ENCODE measurements at regions of chr6 and their contacts with region 1.

Region 1: DNA sequence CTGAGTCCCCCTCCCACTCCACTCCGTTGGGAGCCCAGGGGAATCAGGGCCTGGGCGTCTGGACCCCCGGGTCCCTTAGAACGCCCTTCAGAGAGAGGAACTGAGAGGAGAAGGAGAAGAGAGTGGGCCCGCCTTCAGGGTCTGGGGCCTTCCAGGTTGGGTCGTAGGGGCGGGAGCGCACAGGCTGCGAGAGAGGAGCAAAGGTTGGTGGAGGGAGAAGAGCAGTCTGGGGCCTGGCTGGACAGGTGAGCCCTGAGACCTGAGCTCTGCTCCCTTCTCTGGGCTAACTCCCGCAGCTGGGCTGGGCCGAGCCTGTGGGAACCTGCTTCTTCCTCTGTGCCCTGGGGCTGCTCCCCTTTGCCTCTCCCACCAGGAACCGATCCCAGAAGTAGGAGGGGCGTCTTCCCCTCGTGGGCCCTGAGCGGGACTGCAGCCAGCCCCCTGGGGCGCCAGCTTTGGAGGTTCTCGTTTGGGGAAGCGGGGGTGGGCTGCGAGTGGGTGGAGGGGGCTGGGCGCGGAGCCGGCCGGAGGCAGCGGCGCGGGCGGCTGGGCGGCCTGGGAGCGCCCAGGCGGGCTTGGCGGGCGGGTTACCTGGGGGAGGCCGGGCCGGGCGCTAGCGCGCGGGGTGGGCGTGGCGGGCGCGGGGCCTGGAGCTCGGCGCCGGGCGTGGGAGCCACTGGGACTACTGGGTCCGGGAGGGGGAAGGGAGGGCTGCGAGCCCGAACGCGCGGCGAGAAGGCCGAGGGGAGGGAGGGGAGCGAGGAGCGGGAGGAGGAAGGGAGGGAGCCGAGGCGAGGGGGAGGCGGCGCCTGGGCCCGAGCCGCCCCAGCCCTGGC is at the start of gene DDR1:
- DNase-seq: peak; percentile 75
- ATAC-seq: peak; percentile 31
- H3K4me3 ChIP-seq: peak within 1 kb of the TSS; percentile 70
- H3K27ac ChIP-seq: peak within 1 kb of the TSS; percentile 93
- H3K4me1 ChIP-seq: peaks cover 58% of the 10 kb centered on the region
- H3K27me3 ChIP-seq: no peaks in the 10 kb centered on the region
- CTCF ChIP-seq: no peak
- total RNA-seq, gene DDR1: 108 and 144 TPM in 2 replicates

Region 2: GRCh38 chr6:30192076-30192475 is 691.8 kb before region 1 on chr6:
- CTCF ChIA-PET with region 1: no interaction called
- POLR2A ChIA-PET with region 1: interaction called, 10 read pairs
- intact Hi-C with region 1: no loop called
- DNase-seq: no peak
- ATAC-seq: no peak
- H3K4me3 ChIP-seq: no peak overlapping the region
- H3K27ac ChIP-seq: no peak overlapping the region
- H3K4me1 ChIP-seq: no peaks in the 10 kb centered on the region
- H3K27me3 ChIP-seq: no peaks in the 10 kb centered on the region
- CTCF ChIP-seq: no peak

Region 3: DNA sequence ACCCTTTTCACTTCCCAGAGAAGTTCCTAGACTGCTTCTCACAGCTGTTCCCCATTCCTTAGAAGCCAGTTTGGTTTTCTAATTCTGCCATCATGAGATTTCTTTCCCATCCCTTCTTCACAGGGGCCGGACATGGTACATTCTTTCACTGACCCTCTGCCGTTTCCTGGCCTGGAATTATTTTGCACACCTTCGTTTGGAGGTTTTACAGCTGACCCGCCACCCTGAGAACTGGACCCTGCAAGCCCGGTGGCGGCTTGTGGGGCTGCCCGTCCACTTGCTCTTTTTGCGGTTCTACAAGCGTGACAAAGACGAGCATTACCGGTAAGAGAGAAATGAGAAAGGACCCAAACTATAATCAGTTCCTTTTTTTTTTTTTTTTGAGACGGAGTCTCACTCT is 232.8 kb before region 1 on chr6:
- CTCF ChIA-PET with region 1: no interaction called
- POLR2A ChIA-PET with region 1: no interaction called
- intact Hi-C with region 1: no loop called
- DNase-seq: no peak
- ATAC-seq: no peak
- H3K4me3 ChIP-seq: no peak overlapping the region
- H3K27ac ChIP-seq: no peak overlapping the region
- H3K4me1 ChIP-seq: peaks cover 9% of the 10 kb centered on the region
- H3K27me3 ChIP-seq: no peaks in the 10 kb centered on the region
- CTCF ChIP-seq: no peak

Region 4: DNA sequence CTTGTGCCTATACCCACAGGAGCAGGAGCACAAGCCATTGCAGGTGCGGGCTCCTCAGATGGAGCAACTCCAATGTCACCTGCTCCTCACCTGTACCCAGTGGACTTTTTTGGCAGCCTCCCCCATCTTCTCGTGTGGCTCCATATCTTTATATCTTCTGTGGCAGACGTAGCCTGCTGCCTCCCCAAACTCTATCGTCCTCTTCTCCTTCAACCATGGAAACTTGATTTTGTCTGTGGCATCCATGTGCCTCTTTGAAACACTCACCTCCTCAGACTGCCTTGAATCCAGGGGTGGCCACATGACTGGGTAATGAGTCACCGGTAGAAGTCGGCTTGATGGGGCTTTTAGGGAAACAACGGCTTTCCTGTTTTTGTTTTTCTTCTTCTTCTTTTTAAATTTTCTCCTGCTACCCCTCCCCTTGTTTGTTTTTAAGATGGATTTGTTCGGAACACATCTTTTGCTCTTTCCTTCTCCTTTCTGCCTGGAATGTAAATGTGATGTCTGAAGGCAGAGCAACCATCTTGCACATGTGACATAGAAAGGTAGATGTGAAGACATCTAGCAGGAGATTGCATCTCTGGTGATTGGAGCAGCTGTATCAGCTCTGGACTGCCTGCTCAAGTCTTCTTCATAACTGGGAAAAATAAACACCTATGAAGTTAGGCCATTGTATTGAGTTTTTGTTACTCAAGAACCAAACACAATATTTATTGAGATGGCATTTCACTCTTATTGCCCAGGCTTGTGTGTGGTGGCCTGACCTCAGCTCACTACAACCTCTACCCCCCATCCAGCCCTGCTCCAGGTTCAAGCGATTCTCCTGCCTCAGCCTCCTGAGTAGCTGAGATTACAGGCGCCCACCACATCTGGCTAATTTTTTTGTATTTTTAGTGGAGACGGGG is 69.5 kb before region 1 on chr6:
- CTCF ChIA-PET with region 1: no interaction called
- POLR2A ChIA-PET with region 1: interaction called, 26 read pairs
- intact Hi-C with region 1: no loop called
- DNase-seq: peak; percentile 81
- ATAC-seq: peak; percentile 71
- H3K4me3 ChIP-seq: no peak overlapping the region
- H3K27ac ChIP-seq: peak overlapping the region; percentile 96
- H3K4me1 ChIP-seq: peaks cover 63% of the 10 kb centered on the region
- H3K27me3 ChIP-seq: no peaks in the 10 kb centered on the region
- CTCF ChIP-seq: no peak

Region 5: GRCh38 chr6:30914076-30914853 is 30.4 kb after region 1 on chr6 and contains the start of gene VARS2:
- CTCF ChIA-PET with region 1: interaction called, 5 read pairs
- POLR2A ChIA-PET with region 1: interaction called, 6 read pairs
- intact Hi-C with region 1: loop called (anchors 1 kb)
- DNase-seq: peak; percentile 97
- ATAC-seq: peak; percentile 87
- H3K4me3 ChIP-seq: peak within 1 kb of the TSS; percentile 67
- H3K27ac ChIP-seq: peak within 1 kb of the TSS; percentile 51
- H3K4me1 ChIP-seq: peaks cover 28% of the 10 kb centered on the region
- H3K27me3 ChIP-seq: no peaks in the 10 kb centered on the region
- CTCF ChIP-seq: peak; percentile 50
- total RNA-seq, gene VARS2: 66.5 and 87.8 TPM in 2 replicates

Region 6: GRCh38 chr6:31087494-31088089 is 203.7 kb after region 1 on chr6:
- CTCF ChIA-PET with region 1: no interaction called
- POLR2A ChIA-PET with region 1: no interaction called
- intact Hi-C with region 1: no loop called
- DNase-seq: peak; percentile 97
- ATAC-seq: peak; percentile 95
- H3K4me3 ChIP-seq: peak overlapping the region; percentile 64
- H3K27ac ChIP-seq: peak overlapping the region; percentile 31
- H3K4me1 ChIP-seq: peaks cover 11% of the 10 kb centered on the region
- H3K27me3 ChIP-seq: no peaks in the 10 kb centered on the region
- CTCF ChIP-seq: peak; percentile 87

Region 7: GRCh38 chr6:31216208-31216898 is 332.4 kb after region 1 on chr6:
- CTCF ChIA-PET with region 1: no interaction called
- POLR2A ChIA-PET with region 1: no interaction called
- intact Hi-C with region 1: no loop called
- DNase-seq: no peak
- ATAC-seq: no peak
- H3K4me3 ChIP-seq: no peak overlapping the region
- H3K27ac ChIP-seq: no peak overlapping the region
- H3K4me1 ChIP-seq: no peaks in the 10 kb centered on the region
- H3K27me3 ChIP-seq: no peaks in the 10 kb centered on the region
- CTCF ChIP-seq: no peak

Measured in PC-3 (cell line).